GM10248 (cell line): ENCODE measurements at regions of chr17 and their contacts with region 1.

Region 1: GRCh38 chr17:12047681-12048376 is 27.2 kb downstream of the MAP2K4 start:
- DNase-seq: no peak
- CTCF ChIP-seq: no peak

Region 2: DNA sequence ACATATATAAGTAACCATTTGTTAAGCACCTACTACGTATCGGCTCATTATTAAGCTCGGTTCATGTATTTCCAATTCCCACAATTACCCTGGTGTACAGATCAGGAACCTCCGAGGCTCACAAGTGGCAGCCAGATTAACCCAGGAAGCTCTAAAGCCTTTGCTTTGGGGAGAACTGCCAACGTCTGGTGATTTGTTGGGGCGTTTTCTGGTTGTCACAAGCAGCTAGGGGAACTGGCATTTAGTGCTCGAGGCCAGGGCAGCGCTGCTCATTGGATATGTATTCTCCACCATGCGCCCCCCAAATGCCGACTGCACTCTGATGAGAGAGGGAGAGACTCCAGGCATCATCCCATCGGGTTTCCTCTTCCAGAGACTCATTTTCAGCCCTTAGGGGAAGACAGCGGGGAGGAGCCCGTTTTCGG is 51.1 kb before region 1 on chr17:
- CTCF ChIA-PET with region 1: no interaction called
- POLR2A ChIA-PET with region 1: no interaction called
- DNase-seq: peak; percentile 42
- CTCF ChIP-seq: no peak

Region 3: GRCh38 chr17:12027658-12028057 is 20.2 kb before region 1 on chr17:
- CTCF ChIA-PET with region 1: interaction called, 10 read pairs
- POLR2A ChIA-PET with region 1: no interaction called
- DNase-seq: no peak
- CTCF ChIP-seq: no peak

Region 4: GRCh38 chr17:12089809-12090384 is 42.1 kb after region 1 on chr17:
- CTCF ChIA-PET with region 1: no interaction called
- POLR2A ChIA-PET with region 1: no interaction called
- DNase-seq: no peak
- CTCF ChIP-seq: no peak